AG04450 (cell line): ENCODE measurements at regions of chr16 and their contacts with region 1.

Region 1: GRCh38 chr16:73878611-73879010 is 418.0 kb upstream of the PSMD7 start:
- DNase-seq: peak; percentile 39
- H3K4me3 ChIP-seq: no peak overlapping the region
- H3K27ac ChIP-seq: no peak overlapping the region
- H3K27me3 ChIP-seq: peaks cover 2% of the 10 kb centered on the region
- CTCF ChIP-seq: peak; percentile 69

Region 2: DNA sequence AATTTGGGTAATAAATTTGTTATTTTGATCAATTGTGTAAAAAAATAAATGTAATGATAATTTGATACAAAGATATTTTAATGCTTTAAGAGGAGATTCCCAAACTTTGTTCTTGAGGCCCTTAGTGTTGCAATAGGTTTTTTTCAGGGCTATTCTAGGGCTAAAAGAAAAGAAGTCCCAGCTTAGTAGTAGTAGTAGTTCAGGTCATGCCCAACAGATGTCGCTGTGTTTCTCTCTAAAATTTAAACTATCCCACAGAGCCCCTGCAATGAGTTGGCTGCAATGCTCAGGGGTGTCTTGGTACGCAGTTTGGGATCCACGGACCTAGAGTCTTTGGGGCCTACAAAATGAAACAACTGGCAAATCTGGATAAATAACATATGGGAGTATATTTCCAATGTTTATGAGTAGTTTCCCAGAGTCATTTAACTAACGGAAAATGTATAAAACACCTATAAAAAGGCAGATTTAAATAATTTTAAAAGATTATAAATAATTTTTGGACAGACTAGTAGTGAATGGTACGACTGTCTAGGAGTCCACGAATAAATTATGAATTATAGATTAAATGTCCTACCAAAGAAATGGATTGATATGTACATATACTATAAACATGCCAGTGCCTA is 1478.2 kb before region 1 on chr16:
- CTCF ChIA-PET with region 1: interaction called, 16 read pairs
- POLR2A ChIA-PET with region 1: no interaction called
- DNase-seq: peak; percentile 48
- H3K4me3 ChIP-seq: no peak overlapping the region
- H3K27ac ChIP-seq: no peak overlapping the region
- H3K27me3 ChIP-seq: no peaks in the 10 kb centered on the region
- CTCF ChIP-seq: peak; percentile 81

Region 3: GRCh38 chr16:72501739-72502593 is 1376.6 kb before region 1 on chr16:
- CTCF ChIA-PET with region 1: interaction called, 57 read pairs
- POLR2A ChIA-PET with region 1: no interaction called
- DNase-seq: peak; percentile 45
- H3K4me3 ChIP-seq: no peak overlapping the region
- H3K27ac ChIP-seq: no peak overlapping the region
- H3K27me3 ChIP-seq: no peaks in the 10 kb centered on the region
- CTCF ChIP-seq: peak; percentile 98

Region 4: GRCh38 chr16:73058221-73058615 is 820.4 kb before region 1 on chr16:
- CTCF ChIA-PET with region 1: interaction called, 10 read pairs
- POLR2A ChIA-PET with region 1: no interaction called
- DNase-seq: no peak
- H3K4me3 ChIP-seq: peak overlapping the region; percentile 72
- H3K27ac ChIP-seq: no peak overlapping the region
- H3K27me3 ChIP-seq: no peaks in the 10 kb centered on the region
- CTCF ChIP-seq: no peak

Region 5: DNA sequence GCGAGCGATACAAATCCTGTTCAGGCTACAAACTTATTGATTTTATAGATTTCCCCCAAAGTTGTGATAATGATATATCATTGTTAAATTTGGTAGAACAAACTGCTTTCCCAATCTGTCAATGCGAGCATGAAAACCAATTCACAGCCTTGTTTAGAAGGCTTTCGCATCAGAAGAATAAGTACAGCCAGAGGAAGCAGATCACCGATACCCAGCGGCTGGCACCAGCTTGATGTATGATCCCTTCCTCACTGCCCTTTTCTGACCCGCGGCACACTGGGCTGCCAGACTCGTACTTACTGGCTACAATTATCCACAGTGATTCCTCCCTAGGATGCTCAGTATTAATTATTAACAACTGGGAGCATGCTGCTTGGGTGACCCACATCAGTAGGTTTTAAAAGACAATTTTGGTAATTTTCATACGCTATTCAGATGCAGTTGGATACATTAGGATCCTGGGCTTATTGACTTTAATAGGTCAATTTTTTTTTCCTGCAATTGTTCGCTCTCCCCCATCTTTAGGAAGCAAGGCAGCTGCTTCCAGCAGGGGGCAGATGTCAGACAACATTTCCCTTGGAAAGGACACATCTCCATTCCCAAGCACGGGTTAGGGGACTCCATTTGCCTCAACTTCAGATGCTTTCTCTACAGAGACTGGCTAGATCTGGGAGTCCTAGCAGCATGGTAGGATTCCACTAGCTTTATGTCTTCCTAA is 164.7 kb before region 1 on chr16:
- CTCF ChIA-PET with region 1: interaction called, 12 read pairs
- POLR2A ChIA-PET with region 1: no interaction called
- DNase-seq: no peak
- H3K4me3 ChIP-seq: no peak overlapping the region
- H3K27ac ChIP-seq: no peak overlapping the region
- H3K27me3 ChIP-seq: peaks cover 6% of the 10 kb centered on the region
- CTCF ChIP-seq: peak; percentile 58

Region 6: GRCh38 chr16:73915140-73915539 is 36.5 kb after region 1 on chr16:
- CTCF ChIA-PET with region 1: no interaction called
- POLR2A ChIA-PET with region 1: no interaction called
- DNase-seq: no peak
- H3K4me3 ChIP-seq: no peak overlapping the region
- H3K27ac ChIP-seq: no peak overlapping the region
- H3K27me3 ChIP-seq: no peaks in the 10 kb centered on the region
- CTCF ChIP-seq: no peak

Region 7: DNA sequence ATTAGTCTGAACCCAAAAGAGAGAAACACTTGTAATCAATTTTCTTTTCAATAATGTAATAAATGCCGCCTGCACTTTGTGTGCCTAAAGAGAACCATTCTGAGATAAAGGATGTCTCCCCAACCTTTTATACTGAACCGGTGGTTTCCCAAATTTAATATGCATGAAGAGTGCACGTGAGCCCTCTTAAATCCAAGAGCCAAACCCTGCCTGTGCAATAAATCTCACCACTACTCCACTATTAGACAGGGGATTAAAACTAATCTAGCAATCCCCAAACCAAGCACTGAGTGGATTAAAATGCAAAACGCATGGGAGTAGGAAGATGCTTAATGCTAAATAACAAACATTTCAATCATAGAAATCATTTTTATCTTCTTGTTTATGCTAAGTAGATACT is 67.0 kb after region 1 on chr16:
- CTCF ChIA-PET with region 1: no interaction called
- POLR2A ChIA-PET with region 1: no interaction called
- DNase-seq: no peak
- H3K4me3 ChIP-seq: no peak overlapping the region
- H3K27ac ChIP-seq: no peak overlapping the region
- H3K27me3 ChIP-seq: no peaks in the 10 kb centered on the region
- CTCF ChIP-seq: no peak